A549 (cell line): ENCODE measurements at regions of chr3 and their contacts with region 1.

Region 1: GRCh38 chr3:11155341-11156025 is 1.2 kb downstream of the HRH1 start:
- DNase-seq: peak; percentile 78 to 87
- ATAC-seq: peak; percentile 91 to 98
- H3K4me3 ChIP-seq: peak overlapping the region; percentile 56
- H3K27ac ChIP-seq: peak overlapping the region; percentile 66 to 83; a peak in 5 of 6 replicates
- H3K4me1 ChIP-seq: peaks cover 7% of the 10 kb centered on the region; the same call in 2 of the 3 replicates
- CTCF ChIP-seq: peak; percentile 83
- EP300 ChIP-seq: no peak
- POLR2A ChIP-seq: no peak
- RAD21 ChIP-seq: peak; percentile 78 to 79

Region 2: DNA sequence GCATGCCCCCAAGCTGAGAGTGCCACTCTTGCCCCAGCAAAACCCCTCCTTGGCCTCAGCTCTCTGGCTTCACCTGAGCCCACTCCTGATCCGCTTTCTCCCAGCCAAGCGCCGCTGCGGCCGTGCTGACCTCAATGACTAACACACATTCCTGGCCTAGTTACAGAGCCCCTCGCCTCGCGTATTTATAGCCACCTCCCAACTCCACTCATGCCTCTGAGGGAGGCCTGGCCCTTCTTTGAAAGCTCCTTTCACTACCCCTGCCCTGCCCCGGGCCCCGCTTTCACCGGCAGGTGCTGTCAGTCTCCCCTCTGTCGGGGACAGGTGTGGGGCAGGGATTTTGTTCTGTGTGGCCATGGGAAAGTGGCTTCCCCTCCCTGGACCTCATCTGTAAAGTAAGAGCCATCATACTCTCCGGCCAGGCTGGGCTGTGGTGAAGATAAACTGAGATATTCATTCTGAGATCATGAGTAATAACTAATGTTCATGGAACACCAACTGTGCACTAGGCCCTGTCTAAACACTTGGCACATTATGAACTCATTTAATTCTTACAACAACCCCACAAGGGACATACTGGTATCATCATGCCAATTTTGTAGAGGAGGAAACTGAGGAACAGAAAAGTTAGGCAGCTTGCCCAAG is 636.9 kb before region 1 on chr3:
- CTCF ChIA-PET with region 1: no interaction called
- POLR2A ChIA-PET with region 1: no interaction called
- DNase-seq: no peak
- ATAC-seq: no peak
- H3K4me3 ChIP-seq: no peak overlapping the region
- H3K27ac ChIP-seq: no peak overlapping the region
- H3K4me1 ChIP-seq: no peaks in the 10 kb centered on the region
- CTCF ChIP-seq: no peak
- EP300 ChIP-seq: no peak
- POLR2A ChIP-seq: no peak
- RAD21 ChIP-seq: no peak

Region 3: DNA sequence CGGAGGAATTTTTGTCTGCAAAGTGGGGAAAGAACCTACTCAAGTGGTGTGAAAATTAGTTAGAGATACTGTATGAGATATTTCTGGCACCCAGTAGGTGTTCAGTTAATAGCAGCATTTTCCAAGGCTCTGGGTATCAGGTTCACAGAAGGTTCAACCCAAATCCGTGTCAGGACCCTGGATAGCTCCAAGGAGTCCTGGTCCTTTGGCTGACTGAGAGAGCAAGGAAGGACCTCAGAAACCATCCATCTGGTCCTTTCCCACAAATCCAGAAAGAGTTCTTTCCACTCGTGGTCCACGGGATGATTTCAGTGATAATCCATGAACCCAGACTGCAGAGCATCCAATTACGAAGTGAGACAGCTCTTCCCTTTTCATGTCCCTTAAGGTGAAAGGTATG is 288.1 kb before region 1 on chr3:
- CTCF ChIA-PET with region 1: no interaction called
- POLR2A ChIA-PET with region 1: no interaction called
- DNase-seq: no peak
- ATAC-seq: no peak
- H3K4me3 ChIP-seq: no peak overlapping the region
- H3K27ac ChIP-seq: no peak overlapping the region
- H3K4me1 ChIP-seq: no peaks in the 10 kb centered on the region
- CTCF ChIP-seq: no peak
- EP300 ChIP-seq: no peak
- POLR2A ChIP-seq: no peak
- RAD21 ChIP-seq: no peak

Region 4: GRCh38 chr3:11096266-11097135 is 59.0 kb before region 1 on chr3:
- CTCF ChIA-PET with region 1: interaction called, 36 read pairs
- POLR2A ChIA-PET with region 1: no interaction called
- DNase-seq: peak; percentile 73 to 88
- ATAC-seq: peak; percentile 93 to 95
- H3K4me3 ChIP-seq: peak overlapping the region; percentile 16
- H3K27ac ChIP-seq: peak overlapping the region; percentile 78 to 92
- H3K4me1 ChIP-seq: peaks cover 16% of the 10 kb centered on the region
- CTCF ChIP-seq: no peak; the same call in 2 of the 3 replicates
- EP300 ChIP-seq: peak in 1 of 2 experiments; percentile 44; a peak in 1 of 5 replicates
- POLR2A ChIP-seq: no peak
- RAD21 ChIP-seq: peak in 1 of 2 experiments; percentile 38; a peak in 3 of 5 replicates

Region 5: DNA sequence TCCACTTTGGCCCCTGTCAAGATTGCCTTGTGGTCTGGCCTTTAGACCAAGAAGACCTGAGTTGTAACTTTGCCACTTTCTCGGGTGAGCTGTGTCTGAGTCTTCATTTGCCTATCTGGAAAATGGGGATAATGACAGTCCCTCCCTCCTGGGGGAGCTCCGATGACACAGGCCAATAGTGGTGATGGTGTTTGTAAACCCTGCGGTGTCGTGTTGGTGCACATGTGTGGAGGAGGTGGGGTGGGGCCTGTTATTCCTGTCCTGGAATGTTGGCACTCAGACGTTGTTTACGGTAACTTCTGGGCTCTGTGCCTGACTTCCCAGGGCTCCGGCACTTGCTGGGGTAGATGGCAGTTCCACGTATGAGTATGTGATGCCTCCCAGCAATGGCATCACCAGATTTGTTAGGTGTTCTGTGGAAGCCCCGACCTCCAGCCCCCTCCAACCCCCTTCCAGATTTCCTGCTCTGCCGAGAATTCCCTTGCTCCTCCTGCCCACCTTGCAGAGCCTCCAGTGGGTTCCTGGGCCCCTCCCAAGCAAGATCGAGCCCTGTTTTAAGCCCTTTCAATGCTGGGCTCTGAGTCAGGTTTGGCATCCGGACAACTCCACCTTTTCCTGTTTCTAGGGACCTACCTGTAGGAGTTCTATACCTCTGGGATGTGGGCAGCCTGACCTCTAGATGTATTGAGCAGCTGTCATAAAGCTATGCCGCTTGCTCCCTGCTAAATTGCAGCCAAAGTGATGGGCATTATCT is 30.3 kb after region 1 on chr3:
- CTCF ChIA-PET with region 1: interaction called, 31 read pairs
- POLR2A ChIA-PET with region 1: no interaction called
- DNase-seq: peak; percentile 58 to 83
- ATAC-seq: peak; percentile 87 to 91
- H3K4me3 ChIP-seq: no peak overlapping the region
- H3K27ac ChIP-seq: peak overlapping the region in 1 of 2 experiments; percentile 60; a peak in 3 of 6 replicates
- H3K4me1 ChIP-seq: peaks cover 25% of the 10 kb centered on the region
- CTCF ChIP-seq: 0 out of 3 replicates have a peak, but pooled peaks have one; percentile 17
- EP300 ChIP-seq: no peak
- POLR2A ChIP-seq: no peak
- RAD21 ChIP-seq: peak; percentile 28 to 40; a peak in 4 of 5 replicates

Region 6: DNA sequence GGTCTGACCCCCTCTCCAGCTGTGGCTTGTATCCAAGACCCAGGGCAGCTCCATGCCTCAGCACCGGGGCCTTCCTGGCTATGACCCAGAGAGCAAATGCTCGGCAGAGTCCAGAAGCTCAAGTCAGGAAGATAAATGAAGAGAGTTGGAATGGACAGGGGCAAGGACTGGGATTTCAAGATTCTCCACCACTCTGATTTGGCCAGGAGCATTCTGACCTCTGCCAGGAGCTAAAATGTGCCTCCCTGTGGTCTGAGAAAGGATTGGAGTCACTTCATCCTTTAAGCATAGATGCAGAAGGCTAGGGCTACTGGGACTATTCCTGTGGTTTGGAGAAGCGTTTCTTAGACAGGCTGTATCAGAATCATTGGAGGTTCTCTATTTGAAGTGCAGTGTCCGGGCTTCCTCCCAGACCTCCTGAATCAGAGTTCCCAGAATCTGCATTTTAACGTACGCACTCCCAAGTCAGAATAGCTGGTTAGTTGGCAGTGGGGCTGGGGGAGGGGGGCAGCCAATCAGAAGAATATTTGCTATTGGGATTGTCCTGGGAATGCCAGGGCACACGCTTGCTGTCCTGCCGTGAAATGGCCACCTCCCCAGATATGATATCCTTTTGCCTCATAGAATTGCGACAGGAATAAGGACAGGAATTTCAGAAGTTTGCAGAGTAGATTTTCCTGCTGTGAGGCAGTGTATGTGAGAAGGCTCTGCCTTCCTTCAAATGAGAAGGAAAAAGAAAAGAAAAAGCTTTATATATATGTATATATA is 56.2 kb after region 1 on chr3:
- CTCF ChIA-PET with region 1: interaction called, 74 read pairs
- POLR2A ChIA-PET with region 1: no interaction called
- DNase-seq: no peak
- ATAC-seq: peak; percentile 69 to 74
- H3K4me3 ChIP-seq: no peak overlapping the region
- H3K27ac ChIP-seq: peak overlapping the region; percentile 55 to 69
- H3K4me1 ChIP-seq: peaks cover 39% of the 10 kb centered on the region
- CTCF ChIP-seq: no peak
- EP300 ChIP-seq: no peak
- POLR2A ChIP-seq: no peak
- RAD21 ChIP-seq: no peak

Region 7: GRCh38 chr3:11335056-11335608 is 179.6 kb after region 1 on chr3:
- CTCF ChIA-PET with region 1: interaction called, 90 read pairs
- POLR2A ChIA-PET with region 1: no interaction called
- DNase-seq: peak; percentile 55 to 66
- ATAC-seq: peak; percentile 93 to 94
- H3K4me3 ChIP-seq: no peak overlapping the region
- H3K27ac ChIP-seq: 0 out of 6 replicates have a peak overlapping the region, but pooled peaks of 1 of the 2 experiments have one; percentile 7
- H3K4me1 ChIP-seq: no peaks in the 10 kb centered on the region; the same call in 2 of the 3 replicates
- CTCF ChIP-seq: peak; percentile 86
- EP300 ChIP-seq: no peak
- POLR2A ChIP-seq: no peak
- RAD21 ChIP-seq: peak; percentile 80 to 85

Region 8: DNA sequence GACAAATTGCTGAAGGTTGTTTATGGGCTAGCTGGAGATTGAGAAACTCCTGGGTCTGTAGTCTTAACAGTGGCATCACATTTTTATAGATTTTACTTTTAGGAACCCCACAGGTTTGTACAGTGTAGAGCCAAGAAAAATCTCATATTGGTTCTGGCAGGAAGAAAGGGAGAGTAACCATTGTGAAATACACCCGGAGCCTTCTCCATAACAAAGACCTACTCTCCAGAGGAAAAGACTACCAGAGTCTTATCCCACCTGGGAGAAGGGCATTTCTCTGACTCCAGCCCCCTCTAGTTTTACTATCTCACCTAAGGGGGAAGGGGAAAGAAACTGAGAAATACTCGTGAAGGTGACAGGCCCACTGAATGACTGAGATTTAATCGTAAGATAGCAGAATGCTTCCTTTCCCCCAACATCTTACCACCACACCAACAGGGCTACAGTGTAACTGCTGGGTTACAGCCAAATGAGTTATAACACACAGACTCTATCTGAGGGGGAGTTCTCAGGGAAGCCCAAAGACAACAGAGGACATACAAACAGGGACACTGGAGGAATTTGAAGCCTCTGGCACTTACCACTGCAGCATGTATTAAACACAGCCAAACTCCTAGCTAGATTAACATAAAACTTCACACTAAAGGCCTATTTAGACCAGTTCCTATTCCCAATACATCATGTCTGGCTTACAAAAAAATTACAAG is 904.8 kb after region 1 on chr3:
- CTCF ChIA-PET with region 1: no interaction called
- POLR2A ChIA-PET with region 1: no interaction called
- DNase-seq: no peak
- ATAC-seq: no peak
- H3K4me3 ChIP-seq: no peak overlapping the region
- H3K27ac ChIP-seq: no peak overlapping the region
- H3K4me1 ChIP-seq: no peaks in the 10 kb centered on the region
- CTCF ChIP-seq: no peak
- EP300 ChIP-seq: no peak
- POLR2A ChIP-seq: no peak
- RAD21 ChIP-seq: no peak